ENCODE measurements at regions of chr9 and their contacts with region 1.

Region 1: GRCh38 chr9:35748858-35749514 is at the starts of genes GBA2 and RGP1:
- DNase-seq: peak; percentile 76
- ATAC-seq: peak; percentile 85
- H3K4me3 Mint-ChIP-seq: peak within 1 kb of the TSS; percentile 94
- H3K27ac Mint-ChIP-seq: peak within 1 kb of the TSS; percentile 88
- H3K4me1 Mint-ChIP-seq: peaks cover 32% of the 10 kb centered on the region
- H3K27me3 Mint-ChIP-seq: no peaks in the 10 kb centered on the region
- CTCF ChIP-seq: no peak
- total RNA-seq, gene GBA2: 21.2 to 22.3 TPM
- total RNA-seq, gene RGP1: 13.0 to 14.8 TPM

Region 2: DNA sequence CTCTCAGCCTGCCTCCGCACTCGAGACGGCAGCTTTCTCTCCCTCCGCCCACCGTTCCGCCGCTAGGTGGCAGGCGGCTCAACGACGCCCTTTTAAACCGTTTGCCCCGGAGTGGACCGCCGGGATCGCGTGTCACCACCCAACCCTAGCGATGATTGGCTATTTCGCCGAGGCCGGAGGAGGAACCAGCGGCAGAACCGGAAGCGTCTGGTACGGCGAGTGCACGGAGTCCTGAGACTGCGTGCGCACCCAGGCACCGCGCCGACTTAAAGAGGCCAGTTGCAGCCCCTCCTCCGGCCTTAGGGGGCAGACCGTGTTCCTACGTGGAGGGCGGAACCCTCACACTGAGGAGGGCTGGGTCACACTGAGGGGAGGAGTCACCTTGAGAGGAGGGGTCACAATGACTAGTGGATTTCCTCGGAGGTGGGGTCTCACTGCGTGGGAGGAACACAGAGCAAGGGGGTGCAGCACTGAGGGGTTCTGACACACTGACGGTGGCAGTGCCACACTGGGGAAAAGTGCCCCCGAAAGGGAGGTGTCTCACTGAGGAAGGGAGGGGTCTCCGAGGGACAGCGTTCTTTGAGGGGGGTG is 144.9 kb before region 1 on chr9:
- CTCF ChIA-PET with region 1: interaction called, 11 read pairs
- POLR2A ChIA-PET with region 1: no interaction called
- intact Hi-C with region 1: no loop called
- DNase-seq: peak; percentile 100
- ATAC-seq: peak; percentile 95
- H3K4me3 Mint-ChIP-seq: peak overlapping the region; percentile 87
- H3K27ac Mint-ChIP-seq: peak overlapping the region; percentile 95
- H3K4me1 Mint-ChIP-seq: peaks cover 28% of the 10 kb centered on the region
- H3K27me3 Mint-ChIP-seq: no peaks in the 10 kb centered on the region
- CTCF ChIP-seq: peak; percentile 95

Region 3: DNA sequence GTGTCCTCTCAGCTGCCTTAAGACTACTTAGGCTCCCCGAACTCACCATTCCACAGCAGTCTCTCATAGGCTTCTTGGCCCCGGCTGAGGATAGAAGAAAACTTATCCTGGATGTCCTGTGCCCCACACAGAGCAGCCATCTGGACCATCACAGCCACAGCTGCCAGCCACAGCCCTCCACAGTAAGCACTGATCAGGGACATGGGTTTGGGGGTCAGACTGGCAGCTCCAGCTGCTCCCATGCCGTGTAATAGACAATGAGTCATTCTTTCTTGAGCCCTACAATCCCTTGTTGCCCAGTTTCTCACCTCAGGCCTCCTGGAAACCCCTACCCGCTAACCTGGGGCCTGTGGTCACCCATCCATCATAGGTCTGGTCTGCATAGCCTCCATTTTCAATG is 10.8 kb before region 1 on chr9:
- CTCF ChIA-PET with region 1: interaction called, 51 read pairs
- POLR2A ChIA-PET with region 1: interaction called, 16 read pairs
- intact Hi-C with region 1: no loop called
- DNase-seq: no peak
- ATAC-seq: no peak
- H3K4me3 Mint-ChIP-seq: no peak overlapping the region
- H3K27ac Mint-ChIP-seq: no peak overlapping the region
- H3K4me1 Mint-ChIP-seq: peaks cover 31% of the 10 kb centered on the region
- H3K27me3 Mint-ChIP-seq: no peaks in the 10 kb centered on the region
- CTCF ChIP-seq: no peak